MCF 10A (cell line): ENCODE measurements at regions of chr10 and their contacts with region 1.

Region 1: GRCh38 chr10:74176380-74177139 is 25.5 kb downstream of the ADK start:
- DNase-seq: peak; percentile 96
- H3K4me3 Mint-ChIP-seq: peak overlapping the region; percentile 90
- H3K27ac Mint-ChIP-seq: peak overlapping the region; percentile 96
- H3K4me1 Mint-ChIP-seq: peaks cover 20% of the 10 kb centered on the region
- H3K27me3 Mint-ChIP-seq: no peaks in the 10 kb centered on the region
- CTCF ChIP-seq: no peak

Region 2: DNA sequence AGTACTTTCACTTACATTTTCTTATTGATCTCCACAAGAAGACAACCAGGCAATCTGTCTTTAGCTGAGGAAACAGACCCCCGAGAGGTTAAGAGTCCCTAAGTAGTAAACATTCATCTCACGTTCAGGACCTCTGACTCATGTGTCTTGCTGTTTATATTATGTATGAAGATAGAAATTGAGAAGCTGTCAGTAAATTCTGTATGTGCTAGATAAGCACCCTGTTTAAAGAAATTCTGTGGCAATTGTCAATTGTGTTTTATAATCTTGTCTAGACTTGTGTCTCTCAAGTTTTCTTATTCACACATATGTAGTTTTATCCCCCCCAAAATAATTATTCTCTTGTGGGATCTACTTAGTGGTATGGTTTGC is 11.0 kb before region 1 on chr10:
- CTCF ChIA-PET with region 1: no interaction called
- POLR2A ChIA-PET with region 1: interaction called, 10 read pairs
- intact Hi-C with region 1: no loop called
- DNase-seq: no peak
- H3K4me3 Mint-ChIP-seq: no peak overlapping the region
- H3K27ac Mint-ChIP-seq: no peak overlapping the region
- H3K4me1 Mint-ChIP-seq: no peaks in the 10 kb centered on the region
- H3K27me3 Mint-ChIP-seq: no peaks in the 10 kb centered on the region
- CTCF ChIP-seq: no peak

Region 3: DNA sequence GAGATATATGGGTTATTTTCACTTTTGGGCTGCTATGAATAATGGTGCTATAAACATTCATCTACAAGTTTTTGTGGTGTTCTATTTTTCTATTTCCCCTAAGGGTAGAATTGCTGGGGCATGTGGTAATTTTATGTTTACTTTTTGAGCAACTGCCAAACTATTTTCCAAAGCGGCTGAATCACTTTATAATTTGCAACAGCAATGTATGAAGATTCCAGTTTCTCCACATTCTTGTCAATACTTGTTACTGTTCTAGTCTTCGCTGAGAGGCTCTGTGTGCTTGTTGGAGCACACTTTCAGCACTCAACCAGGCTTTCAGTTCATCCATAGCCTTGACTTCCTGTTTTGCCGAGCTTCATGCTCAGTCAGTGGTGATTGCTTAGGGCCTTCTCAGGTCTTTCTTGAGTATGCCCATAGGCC is 13.4 kb after region 1 on chr10:
- CTCF ChIA-PET with region 1: no interaction called
- POLR2A ChIA-PET with region 1: interaction called, 146 read pairs
- intact Hi-C with region 1: loop called (anchors 2 kb)
- DNase-seq: peak; percentile 94
- H3K4me3 Mint-ChIP-seq: peak overlapping the region; percentile 66
- H3K27ac Mint-ChIP-seq: peak overlapping the region; percentile 91
- H3K4me1 Mint-ChIP-seq: peaks cover 43% of the 10 kb centered on the region
- H3K27me3 Mint-ChIP-seq: no peaks in the 10 kb centered on the region
- CTCF ChIP-seq: no peak

Region 4: GRCh38 chr10:74213571-74214162 is 37.1 kb after region 1 on chr10:
- CTCF ChIA-PET with region 1: no interaction called
- POLR2A ChIA-PET with region 1: interaction called, 20 read pairs
- intact Hi-C with region 1: loop called (anchors 2 kb)
- DNase-seq: peak; percentile 68
- H3K4me3 Mint-ChIP-seq: no peak overlapping the region
- H3K27ac Mint-ChIP-seq: no peak overlapping the region
- H3K4me1 Mint-ChIP-seq: peaks cover 12% of the 10 kb centered on the region
- H3K27me3 Mint-ChIP-seq: no peaks in the 10 kb centered on the region
- CTCF ChIP-seq: peak; percentile 49

Region 5: DNA sequence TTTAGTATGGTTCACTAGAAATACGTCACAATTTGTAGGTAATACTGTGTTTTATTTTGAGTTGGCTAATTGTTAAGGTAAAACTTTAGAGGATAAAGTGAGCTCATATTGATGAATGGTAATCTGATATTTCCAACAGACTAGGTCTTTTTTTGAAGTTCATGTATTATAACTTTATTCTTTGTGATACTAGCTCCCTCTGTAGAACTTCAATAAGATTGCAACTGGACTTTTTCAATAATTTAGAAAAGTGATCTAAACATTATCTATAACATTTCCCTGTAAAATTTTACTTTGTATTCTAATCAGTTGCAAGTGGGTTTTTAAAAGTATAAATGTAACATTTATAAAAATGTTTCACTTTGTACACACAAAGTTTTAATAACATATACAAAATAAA is 58.0 kb after region 1 on chr10:
- CTCF ChIA-PET with region 1: interaction called, 6 read pairs
- POLR2A ChIA-PET with region 1: interaction called, 4 read pairs
- intact Hi-C with region 1: loop called (anchors 1 kb)
- DNase-seq: no peak
- H3K4me3 Mint-ChIP-seq: no peak overlapping the region
- H3K27ac Mint-ChIP-seq: no peak overlapping the region
- H3K4me1 Mint-ChIP-seq: peaks cover 16% of the 10 kb centered on the region
- H3K27me3 Mint-ChIP-seq: no peaks in the 10 kb centered on the region
- CTCF ChIP-seq: peak; percentile 42